ENCODE measurements at regions of chr20 and their contacts with region 1.

Region 1: DNA sequence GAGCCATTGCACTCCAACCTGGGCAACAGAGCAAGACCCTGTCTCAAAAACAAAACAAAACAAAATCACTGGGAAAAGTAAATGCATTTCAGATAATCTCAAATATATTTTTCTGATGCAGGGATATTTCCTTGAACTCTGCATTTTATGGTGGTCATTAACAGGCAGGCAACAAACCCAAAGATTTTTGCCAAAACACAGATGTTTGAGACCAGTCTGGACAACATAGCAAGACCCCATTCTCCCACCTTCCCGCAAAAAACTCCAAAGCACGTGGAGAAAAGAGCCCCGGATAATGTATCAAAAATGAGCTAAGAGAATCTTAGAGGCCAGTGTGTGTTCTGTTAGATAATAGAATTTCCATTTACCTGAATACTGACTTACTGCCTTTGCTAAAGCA is 44.3 kb downstream of the SLC9A8 start:
- DNase-seq: no peak
- H3K4me3 ChIP-seq: no peak overlapping the region
- H3K27ac ChIP-seq: no peak overlapping the region
- H3K4me1 ChIP-seq: peaks cover 0 to under 1% (median 0%) of the 10 kb centered on the region in 4 donors
- H3K27me3 ChIP-seq: no peaks in the 10 kb centered on the region
- CTCF ChIP-seq: no peak
- EP300 ChIP-seq: no peak
- POLR2A ChIP-seq: no peak

Region 2: DNA sequence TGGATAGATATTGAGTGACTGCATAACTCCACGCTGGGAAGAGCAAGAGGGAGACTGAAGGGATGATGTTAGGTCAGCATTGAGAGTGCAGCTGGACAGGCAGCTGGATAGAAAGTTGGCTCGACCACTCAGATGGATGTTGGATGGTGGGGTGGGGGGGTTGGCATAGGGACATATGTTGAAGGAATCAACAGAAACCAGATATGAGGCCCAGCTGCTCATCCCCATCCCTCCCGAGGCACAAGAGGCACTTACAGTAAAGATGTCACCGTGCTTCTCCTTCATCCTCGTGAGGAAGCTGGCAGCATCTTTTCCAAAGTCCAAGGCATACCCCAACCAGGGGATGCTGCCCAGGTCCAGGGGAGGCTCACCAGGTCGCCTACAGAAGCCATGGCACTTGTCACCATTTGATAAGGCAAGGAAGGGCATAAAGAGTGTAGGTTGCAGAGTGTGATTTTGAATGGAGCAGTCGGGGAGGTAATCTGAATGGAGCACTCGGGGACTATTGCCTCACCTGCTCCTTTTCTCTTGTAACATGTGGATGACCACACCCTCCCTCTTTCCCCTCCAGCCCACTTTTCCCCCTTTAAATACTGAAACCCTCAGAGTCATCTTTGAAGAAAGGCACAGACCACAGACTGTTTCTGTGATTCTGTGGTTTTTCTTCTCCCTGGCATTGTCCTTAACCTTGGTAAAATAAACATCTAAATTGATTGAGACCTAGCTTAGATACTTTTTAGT is 306.9 kb before region 1 on chr20:
- intact Hi-C with region 1: no loop called
- DNase-seq: no peak
- H3K4me3 ChIP-seq: no peak overlapping the region
- H3K27ac ChIP-seq: peak overlapping the region in 1 of 4 donors; percentile 91
- H3K4me1 ChIP-seq: peaks cover 0 to 40% (median 28%) of the 10 kb centered on the region in 4 donors
- H3K27me3 ChIP-seq: no peaks in the 10 kb centered on the region
- CTCF ChIP-seq: no peak
- EP300 ChIP-seq: no peak
- POLR2A ChIP-seq: no peak

Region 3: DNA sequence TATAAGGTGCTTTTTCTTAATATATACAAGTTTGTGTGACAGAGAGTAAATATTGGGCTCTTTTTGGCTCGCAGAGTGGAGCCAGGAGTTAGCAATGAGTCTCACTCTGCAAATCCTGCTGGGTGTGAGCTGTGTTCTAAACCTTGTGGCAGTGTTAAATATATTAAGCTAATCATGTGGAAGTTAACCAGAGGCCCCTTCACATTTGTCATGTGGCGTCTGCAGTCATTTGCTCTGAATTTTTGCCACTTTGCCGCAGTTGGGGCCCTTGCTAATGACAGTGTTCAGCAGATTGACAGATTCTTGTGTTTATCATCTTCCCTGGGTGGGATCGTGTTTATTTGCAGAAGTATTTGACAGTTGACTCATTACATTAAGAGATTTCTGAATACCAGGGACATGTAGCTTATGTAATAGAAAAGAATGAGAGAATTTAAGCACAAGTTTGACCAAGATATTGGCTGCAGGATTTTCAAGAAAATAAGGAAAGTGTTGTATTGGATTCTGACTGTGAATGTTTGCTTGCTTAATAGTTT is 20.6 kb after region 1 on chr20:
- intact Hi-C with region 1: loop called (anchors 1 kb)
- DNase-seq: peak; percentile 21
- H3K4me3 ChIP-seq: no peak overlapping the region
- H3K27ac ChIP-seq: peak overlapping the region in 1 of 4 donors; percentile 62
- H3K4me1 ChIP-seq: peaks cover 0 to 24% (median 18%) of the 10 kb centered on the region in 4 donors
- H3K27me3 ChIP-seq: no peaks in the 10 kb centered on the region
- CTCF ChIP-seq: no peak
- EP300 ChIP-seq: no peak
- POLR2A ChIP-seq: no peak

Region 4: DNA sequence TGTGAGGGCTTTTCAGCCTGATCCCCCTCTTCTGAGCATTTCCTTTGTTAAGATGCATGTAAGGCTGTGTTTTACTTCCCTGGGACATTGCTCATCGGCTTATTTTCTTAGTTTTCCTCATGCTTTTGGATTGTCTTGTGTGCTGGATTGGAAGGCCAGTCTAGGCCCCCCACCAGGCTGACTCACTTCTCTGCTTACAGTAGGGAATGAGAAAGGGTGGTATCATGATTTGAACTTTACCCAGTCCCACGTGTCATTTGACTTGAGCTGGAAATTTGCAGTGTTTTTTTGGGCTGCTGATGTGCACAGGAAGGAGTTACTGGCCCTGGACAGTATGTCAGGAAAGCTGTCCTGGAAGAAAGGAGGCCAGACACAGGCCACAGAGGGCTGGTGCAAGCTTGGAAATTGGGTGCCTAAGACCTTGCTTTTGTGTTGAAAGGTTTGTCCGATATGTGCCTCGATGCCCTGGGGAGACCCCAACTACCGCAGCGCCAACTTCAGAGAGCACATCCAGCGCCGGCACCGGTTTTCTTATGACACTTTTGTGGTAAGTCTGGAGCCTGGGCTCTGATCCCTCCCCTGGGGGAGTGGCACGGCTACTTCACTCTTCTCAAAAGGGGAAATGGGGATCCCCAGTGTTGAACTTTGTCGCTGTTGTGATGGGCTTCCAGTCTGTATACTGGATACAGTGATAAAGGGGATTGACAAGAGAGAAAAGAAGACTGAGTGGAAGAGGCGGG is 92.1 kb after region 1 on chr20:
- intact Hi-C with region 1: no loop called
- DNase-seq: peak; percentile 42
- H3K4me3 ChIP-seq: no peak overlapping the region
- H3K27ac ChIP-seq: no peak overlapping the region
- H3K4me1 ChIP-seq: peaks cover 0 to 3% (median 0%) of the 10 kb centered on the region in 4 donors
- H3K27me3 ChIP-seq: no peaks in the 10 kb centered on the region
- CTCF ChIP-seq: no peak
- EP300 ChIP-seq: no peak
- POLR2A ChIP-seq: no peak

Region 5: GRCh38 chr20:50189681-50190582 is 333.0 kb after region 1 on chr20:
- intact Hi-C with region 1: no loop called
- DNase-seq: peak; percentile 97
- H3K4me3 ChIP-seq: peak overlapping the region; percentile 79 to 91 (median 86)
- H3K27ac ChIP-seq: peak overlapping the region; percentile 93 to 100 (median 98)
- H3K4me1 ChIP-seq: peaks cover 0 to 40% (median 31%) of the 10 kb centered on the region in 4 donors
- H3K27me3 ChIP-seq: no peaks in the 10 kb centered on the region
- CTCF ChIP-seq: peak; percentile 68 to 89 (median 78)
- EP300 ChIP-seq: peak in 1 of 4 donors; percentile 5
- POLR2A ChIP-seq: no peak

Region 6: GRCh38 chr20:50509935-50510705 is 653.2 kb after region 1 on chr20 and contains the start of gene PTPN1:
- intact Hi-C with region 1: no loop called
- DNase-seq: peak; percentile 99
- H3K4me3 ChIP-seq: peak within 1 kb of the TSS; percentile 91 to 99 (median 96)
- H3K27ac ChIP-seq: peak within 1 kb of the TSS; percentile 88 to 96 (median 93)
- H3K4me1 ChIP-seq: peaks cover 0 to 51% (median 45%) of the 10 kb centered on the region in 4 donors
- H3K27me3 ChIP-seq: no peaks in the 10 kb centered on the region
- CTCF ChIP-seq: peak in 1 of 4 experiments; percentile 24
- EP300 ChIP-seq: no peak
- POLR2A ChIP-seq: peak; percentile 98
- total RNA-seq, gene PTPN1: 21.6 to 31.2 (median 23.6) TPM

Measured in sigmoid colon (tissue), 7 donors.